WTC11 (cell line): ENCODE measurements at regions of chr12 and their contacts with region 1.

Region 1: DNA sequence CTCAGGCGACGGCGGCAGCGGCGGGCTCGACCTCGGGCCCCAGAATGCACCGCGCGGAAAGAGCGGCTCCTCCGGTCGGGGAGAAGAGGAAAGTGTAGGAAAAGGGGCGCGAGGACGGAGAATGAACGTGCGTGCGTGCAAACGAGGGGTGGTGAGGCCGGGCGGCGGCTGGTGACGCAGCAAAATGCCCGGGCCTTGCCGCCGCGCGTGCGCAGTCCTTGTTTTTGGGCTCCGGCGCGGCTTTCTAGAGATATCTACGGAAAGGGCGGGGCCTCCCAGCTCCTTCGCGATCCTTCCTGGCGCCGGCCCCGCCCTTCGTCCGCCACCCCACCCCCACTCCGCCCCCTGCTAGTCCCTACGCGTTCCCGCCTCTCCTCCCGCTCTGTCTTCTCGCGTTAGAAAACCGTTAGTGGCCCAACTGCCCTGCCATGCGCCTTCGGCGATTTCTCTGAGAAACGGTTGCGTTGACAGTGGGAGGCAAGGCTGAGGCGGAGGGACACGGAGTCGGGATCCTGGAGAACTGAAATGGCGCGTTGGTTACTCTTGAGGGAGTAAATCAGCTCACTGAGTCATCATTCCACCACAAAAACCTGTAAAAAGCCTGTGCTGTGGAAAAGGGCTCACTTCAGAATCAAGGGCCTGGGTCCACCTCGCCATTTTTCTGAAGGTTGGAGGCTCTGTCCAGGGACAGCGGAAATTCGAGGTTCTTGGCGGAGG is at the start of gene PTGES3:
- DNase-seq: peak; percentile 99
- ATAC-seq: peak; percentile 80
- H3K4me3 Mint-ChIP-seq: peak within 1 kb of the TSS; percentile 99
- H3K27ac Mint-ChIP-seq: peak within 1 kb of the TSS; percentile 98
- H3K4me1 Mint-ChIP-seq: peaks cover 17% of the 10 kb centered on the region
- H3K27me3 Mint-ChIP-seq: no peaks in the 10 kb centered on the region; the same call in 1 of the 2 replicates
- CTCF ChIP-seq: no peak
- total RNA-seq, gene PTGES3: 394 to 436 TPM (median 420 TPM) in 3 replicates

Region 2: DNA sequence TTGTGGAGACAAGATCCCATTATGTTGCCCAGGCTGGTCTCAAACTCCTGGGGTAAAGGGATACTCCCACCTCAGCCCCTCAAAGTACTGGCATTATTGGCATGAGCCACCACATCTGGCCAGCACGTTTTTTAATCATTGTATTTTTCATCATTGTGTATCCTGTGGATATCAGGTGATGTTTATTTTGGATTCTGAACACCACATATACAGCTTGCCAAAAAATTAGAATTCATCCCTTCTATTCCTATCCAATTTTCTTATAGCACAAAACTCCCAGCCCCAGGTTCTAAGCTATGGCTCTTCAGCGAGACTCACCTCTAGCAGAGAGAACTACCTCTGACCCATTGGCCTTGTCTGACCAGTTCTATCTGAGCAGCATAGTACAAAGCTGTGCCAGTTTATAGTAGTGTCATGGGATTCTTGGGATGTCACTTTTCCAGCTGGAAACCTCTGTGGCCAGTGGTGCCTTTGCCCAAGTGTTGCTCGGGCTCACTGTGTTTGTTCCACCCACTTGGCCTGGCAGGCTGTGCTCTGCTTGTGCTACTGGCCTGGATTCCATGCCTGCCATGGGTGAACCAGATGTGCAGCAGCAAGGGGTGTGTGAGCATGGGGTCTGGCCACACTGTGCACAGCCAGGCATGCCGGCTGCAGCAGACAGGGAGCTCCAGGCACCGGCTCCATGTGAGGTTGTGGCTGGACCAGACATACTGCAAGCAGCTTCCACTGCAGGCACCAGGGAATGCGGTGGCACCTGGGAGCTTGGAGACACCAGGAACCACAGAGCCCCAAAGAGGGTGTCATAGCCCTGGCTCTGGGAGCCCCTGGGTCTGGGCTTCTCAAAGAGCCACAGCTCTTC is 276.3 kb before region 1 on chr12:
- CTCF ChIA-PET with region 1: no interaction called
- POLR2A ChIA-PET with region 1: no interaction called
- DNase-seq: no peak
- ATAC-seq: no peak
- H3K4me3 Mint-ChIP-seq: no peak overlapping the region
- H3K27ac Mint-ChIP-seq: no peak overlapping the region; the same call in 1 of the 2 replicates
- H3K4me1 Mint-ChIP-seq: no peaks in the 10 kb centered on the region
- H3K27me3 Mint-ChIP-seq: no peaks in the 10 kb centered on the region
- CTCF ChIP-seq: no peak

Region 3: GRCh38 chr12:56565510-56566101 is 122.7 kb before region 1 on chr12:
- CTCF ChIA-PET with region 1: no interaction called
- POLR2A ChIA-PET with region 1: no interaction called
- DNase-seq: peak; percentile 47
- ATAC-seq: peak; percentile 94
- H3K4me3 Mint-ChIP-seq: no peak overlapping the region; the same call in 1 of the 2 replicates
- H3K27ac Mint-ChIP-seq: peak overlapping the region; percentile 53
- H3K4me1 Mint-ChIP-seq: peaks cover 11% of the 10 kb centered on the region
- H3K27me3 Mint-ChIP-seq: no peaks in the 10 kb centered on the region
- CTCF ChIP-seq: no peak

Region 4: GRCh38 chr12:56677680-56678079 is 10.6 kb before region 1 on chr12:
- CTCF ChIA-PET with region 1: interaction called, 3 read pairs
- POLR2A ChIA-PET with region 1: interaction called, 10 read pairs
- DNase-seq: no peak
- ATAC-seq: no peak
- H3K4me3 Mint-ChIP-seq: no peak overlapping the region
- H3K27ac Mint-ChIP-seq: peak overlapping the region; percentile 70; the same call in 1 of the 2 replicates
- H3K4me1 Mint-ChIP-seq: peaks cover 32% of the 10 kb centered on the region
- H3K27me3 Mint-ChIP-seq: no peaks in the 10 kb centered on the region
- CTCF ChIP-seq: no peak

Region 5: GRCh38 chr12:56724972-56725722 is 36.9 kb after region 1 on chr12 and contains the start of gene NACA:
- CTCF ChIA-PET with region 1: no interaction called
- POLR2A ChIA-PET with region 1: interaction called, 15 read pairs
- DNase-seq: peak; percentile 93
- ATAC-seq: peak; percentile 92
- H3K4me3 Mint-ChIP-seq: peak within 1 kb of the TSS; percentile 99
- H3K27ac Mint-ChIP-seq: peak within 1 kb of the TSS; percentile 98
- H3K4me1 Mint-ChIP-seq: peaks cover 48% of the 10 kb centered on the region
- H3K27me3 Mint-ChIP-seq: no peaks in the 10 kb centered on the region
- CTCF ChIP-seq: no peak
- total RNA-seq, gene NACA: 987 to 1,052 TPM (median 1,025 TPM) in 3 replicates

Region 6: GRCh38 chr12:56775638-56776037 is 87.4 kb after region 1 on chr12:
- CTCF ChIA-PET with region 1: no interaction called
- POLR2A ChIA-PET with region 1: no interaction called
- DNase-seq: no peak
- ATAC-seq: no peak
- H3K4me3 Mint-ChIP-seq: no peak overlapping the region
- H3K27ac Mint-ChIP-seq: no peak overlapping the region
- H3K4me1 Mint-ChIP-seq: peaks cover 6% of the 10 kb centered on the region
- H3K27me3 Mint-ChIP-seq: no peaks in the 10 kb centered on the region
- CTCF ChIP-seq: no peak